Sigmoid colon (tissue), 7 donors: ENCODE measurements at regions of chr2 and their contacts with region 1.

Region 1: DNA sequence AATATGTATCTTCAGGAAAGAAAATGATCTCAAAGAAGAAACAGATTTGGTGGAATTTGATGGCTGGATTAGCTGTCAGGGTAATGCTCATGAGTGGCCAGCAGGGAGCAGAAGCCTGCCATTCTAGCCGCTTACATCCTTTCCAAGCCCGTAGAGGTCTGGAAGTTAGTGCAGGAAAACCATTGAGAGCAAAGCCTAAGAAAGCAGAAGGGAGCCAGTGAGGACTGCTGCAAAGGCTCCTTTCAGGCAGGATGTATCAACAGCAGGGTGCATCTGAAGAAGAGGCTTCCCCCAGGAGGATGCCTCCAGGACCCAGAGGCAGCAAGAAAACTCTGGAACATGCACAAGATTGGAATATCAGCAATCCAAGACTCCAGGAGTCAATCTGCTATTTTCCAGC is 22.9 kb upstream of the LBH start:
- DNase-seq: peak; percentile 86
- H3K4me3 ChIP-seq: no peak overlapping the region
- H3K27ac ChIP-seq: peak overlapping the region in 1 of 4 donors; percentile 18
- H3K4me1 ChIP-seq: peaks cover 0 to 7% (median 4%) of the 10 kb centered on the region in 4 donors
- H3K27me3 ChIP-seq: no peaks in the 10 kb centered on the region
- CTCF ChIP-seq: peak; percentile 82 to 95 (median 89)
- EP300 ChIP-seq: no peak
- POLR2A ChIP-seq: no peak

Region 2: DNA sequence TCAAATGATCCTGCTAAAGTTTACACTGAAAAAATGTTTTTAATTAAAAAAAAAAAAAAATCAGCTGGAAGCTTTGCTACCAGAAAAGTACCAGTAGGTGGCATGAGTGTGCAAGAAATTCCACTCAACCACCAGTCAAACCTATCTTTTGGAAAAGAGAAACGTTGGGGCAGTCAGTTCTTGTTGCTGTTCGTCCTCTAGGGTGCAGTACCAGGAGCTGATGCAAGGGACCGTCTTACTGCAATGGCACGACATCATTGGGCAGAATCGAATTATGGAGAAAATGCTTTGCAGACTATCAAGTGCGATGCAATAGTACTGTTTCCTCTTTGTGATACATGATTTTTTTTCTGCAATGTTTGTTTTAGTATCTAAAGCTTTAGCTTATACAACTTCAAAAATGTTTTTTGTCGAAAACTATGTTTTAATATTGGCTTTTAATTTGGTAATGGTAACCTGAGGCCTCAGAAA is 43.4 kb before region 1 on chr2:
- intact Hi-C with region 1: loop called (anchors 2 kb)
- DNase-seq: no peak
- H3K4me3 ChIP-seq: no peak overlapping the region
- H3K27ac ChIP-seq: no peak overlapping the region
- H3K4me1 ChIP-seq: peaks cover 0 to 27% (median 11%) of the 10 kb centered on the region in 4 donors
- H3K27me3 ChIP-seq: no peaks in the 10 kb centered on the region
- CTCF ChIP-seq: peak; percentile 78 to 84 (median 80)
- EP300 ChIP-seq: no peak
- POLR2A ChIP-seq: no peak

Region 3: GRCh38 chr2:30336978-30337841 is 128.8 kb after region 1 on chr2:
- intact Hi-C with region 1: no loop called
- DNase-seq: no peak
- H3K4me3 ChIP-seq: no peak overlapping the region
- H3K27ac ChIP-seq: no peak overlapping the region
- H3K4me1 ChIP-seq: peaks cover 0 to 6% (median 3%) of the 10 kb centered on the region in 4 donors
- H3K27me3 ChIP-seq: no peaks in the 10 kb centered on the region
- CTCF ChIP-seq: no peak
- EP300 ChIP-seq: no peak
- POLR2A ChIP-seq: no peak

Region 4: DNA sequence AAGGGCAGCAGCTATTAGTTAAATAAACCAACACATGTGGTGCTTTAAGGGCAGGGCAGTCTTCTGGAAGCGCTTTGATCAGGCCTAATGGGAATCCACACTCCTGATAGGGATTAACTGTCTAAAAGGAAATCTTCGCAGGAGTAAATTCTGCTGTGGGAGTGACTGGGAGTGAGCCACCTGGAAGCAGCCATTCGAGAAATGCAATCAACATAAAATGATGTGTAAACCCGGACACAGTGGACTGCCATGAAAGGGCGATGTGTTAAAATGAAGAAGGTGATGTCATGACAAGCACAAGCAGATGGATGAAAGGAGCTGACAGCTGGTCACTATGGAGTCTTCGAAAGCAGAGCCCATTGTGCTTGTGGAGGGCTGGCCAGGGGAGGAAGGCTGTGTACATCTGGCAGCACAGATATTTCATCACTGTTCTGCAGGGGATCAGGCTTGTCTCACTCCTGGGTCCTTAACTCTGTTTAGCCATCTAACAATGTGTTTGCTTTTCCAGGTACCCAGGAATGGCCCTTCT is 954.6 kb after region 1 on chr2:
- intact Hi-C with region 1: loop called (anchors 5 kb)
- DNase-seq: no peak
- H3K4me3 ChIP-seq: no peak overlapping the region
- H3K27ac ChIP-seq: no peak overlapping the region
- H3K4me1 ChIP-seq: no peaks in the 10 kb centered on the region
- H3K27me3 ChIP-seq: peaks cover 0 to 4% (median 0%) of the 10 kb centered on the region in 3 donors
- CTCF ChIP-seq: no peak
- EP300 ChIP-seq: no peak
- POLR2A ChIP-seq: no peak